Heart right ventricle (tissue), 16 donors: ENCODE measurements at regions of chr1 and their contacts with region 1.

Region 1: DNA sequence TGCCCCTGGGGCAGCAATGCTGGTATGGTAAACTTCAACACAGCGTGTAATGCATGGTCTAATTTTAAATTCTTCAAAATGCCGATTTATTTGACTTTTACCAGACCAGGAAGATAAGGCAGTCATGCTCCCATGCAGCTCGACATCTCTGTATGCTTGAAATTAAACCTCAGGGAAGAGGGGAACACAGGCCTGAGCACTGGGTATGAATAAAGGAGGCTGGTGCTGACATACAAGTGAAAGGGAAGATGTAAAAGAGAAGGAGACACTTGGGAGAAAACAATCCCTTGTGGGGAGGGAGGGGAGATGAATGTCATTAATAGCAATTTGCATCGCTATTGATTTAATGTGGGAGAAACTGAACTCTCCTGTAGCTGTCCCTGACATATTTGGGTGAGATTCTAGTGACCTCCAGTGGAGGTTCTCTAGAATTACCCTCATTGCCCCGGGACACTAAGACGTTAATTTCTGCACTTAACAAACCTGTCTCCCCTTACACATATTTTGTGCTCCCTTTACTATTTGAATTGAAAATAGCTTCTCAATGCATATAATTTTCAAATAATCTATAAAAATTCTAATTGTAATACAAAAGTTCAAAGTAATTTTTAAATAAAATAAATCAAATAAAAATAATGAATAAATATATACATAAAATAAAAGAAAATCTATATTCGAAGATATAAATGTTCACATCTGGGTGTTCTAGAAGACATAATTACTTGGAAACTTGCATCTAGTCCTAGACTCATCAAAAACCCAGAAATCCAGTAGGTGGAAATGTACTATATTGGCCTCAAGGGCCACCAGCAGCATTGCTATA is 283.1 kb downstream of the LMX1A start:
- DNase-seq: no peak
- ATAC-seq: peak; percentile 55 to 76 (median 68)
- H3K4me3 ChIP-seq: no peak overlapping the region
- H3K27ac ChIP-seq: no peak overlapping the region
- H3K4me1 ChIP-seq: peaks cover 0 to 12% (median 0%) of the 10 kb centered on the region in 9 donors
- H3K27me3 ChIP-seq: no peaks in the 10 kb centered on the region
- CTCF ChIP-seq: peak; percentile 64 to 84 (median 79)

Region 2: GRCh38 chr1:163410073-163410999 is 1663.1 kb before region 1 on chr1:
- intact Hi-C with region 1: loop called in 7 of 10 experiments (anchors 5 to 10 kb)
- DNase-seq: peak in 1 of 2 donors; percentile 17
- ATAC-seq: peak in 1 of 8 donors; percentile 9
- H3K4me3 ChIP-seq: no peak overlapping the region
- H3K27ac ChIP-seq: no peak overlapping the region
- H3K4me1 ChIP-seq: peaks cover 0 to 11% (median 0%) of the 10 kb centered on the region in 9 donors
- H3K27me3 ChIP-seq: peaks cover 0 to 3% (median 0%) of the 10 kb centered on the region in 7 donors
- CTCF ChIP-seq: peak; percentile 44 to 84 (median 78)

Region 3: DNA sequence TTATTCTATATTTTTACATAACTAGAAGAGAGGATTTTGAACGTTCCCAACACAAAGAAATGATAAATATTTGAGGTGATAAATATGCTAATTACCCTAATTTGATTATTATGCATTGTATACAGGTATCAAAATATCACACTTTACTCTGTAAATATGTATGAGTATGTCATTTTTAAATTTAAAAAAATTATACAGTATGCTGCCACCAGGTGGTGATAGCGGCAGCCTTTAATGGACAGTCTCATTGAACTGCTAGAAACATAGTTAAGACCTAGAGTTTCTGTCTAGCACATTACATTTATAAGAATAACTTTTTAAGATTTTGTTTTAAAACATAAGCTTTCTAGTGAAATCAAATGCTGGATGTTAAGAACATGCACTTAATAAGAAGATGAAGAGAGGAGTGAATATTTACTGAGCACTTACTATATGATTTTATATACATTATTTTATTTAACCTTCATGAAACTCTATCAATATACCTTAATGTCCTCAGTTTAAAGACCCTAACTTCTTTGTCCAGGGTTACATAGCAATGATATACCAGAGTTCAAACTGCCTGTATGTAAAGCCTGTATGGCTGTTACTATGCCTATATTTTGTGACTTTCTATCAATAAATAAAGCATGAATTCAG is 1544.6 kb before region 1 on chr1:
- intact Hi-C with region 1: loop called in 8 of 10 experiments (anchors 5 to 10 kb)
- DNase-seq: peak in 1 of 2 donors; percentile 7
- ATAC-seq: no peak
- H3K4me3 ChIP-seq: no peak overlapping the region
- H3K27ac ChIP-seq: no peak overlapping the region
- H3K4me1 ChIP-seq: no peaks in the 10 kb centered on the region
- H3K27me3 ChIP-seq: no peaks in the 10 kb centered on the region
- CTCF ChIP-seq: peak in 8 of 9 donors; percentile 30 to 70 (median 58)

Region 4: GRCh38 chr1:164163289-164163864 is 910.0 kb before region 1 on chr1:
- intact Hi-C with region 1: loop called in 1 of 10 experiments (anchors 10 kb)
- DNase-seq: no peak
- ATAC-seq: no peak
- H3K4me3 ChIP-seq: no peak overlapping the region
- H3K27ac ChIP-seq: no peak overlapping the region
- H3K4me1 ChIP-seq: no peaks in the 10 kb centered on the region
- H3K27me3 ChIP-seq: no peaks in the 10 kb centered on the region
- CTCF ChIP-seq: no peak

Region 5: GRCh38 chr1:164823486-164824279 is 249.7 kb before region 1 on chr1:
- intact Hi-C with region 1: loop called in 1 of 10 experiments (anchors 10 kb)
- DNase-seq: peak in 1 of 2 donors; percentile 38
- ATAC-seq: peak; percentile 53 to 95 (median 88)
- H3K4me3 ChIP-seq: no peak overlapping the region
- H3K27ac ChIP-seq: peak overlapping the region in 9 of 10 donors; percentile 32 to 84 (median 70)
- H3K4me1 ChIP-seq: peaks cover 0 to 31% (median 16%) of the 10 kb centered on the region in 9 donors
- H3K27me3 ChIP-seq: no peaks in the 10 kb centered on the region
- CTCF ChIP-seq: peak in 3 of 9 donors; percentile 24 to 27 (median 27)

Region 6: GRCh38 chr1:165367375-165367993 is 294.1 kb after region 1 on chr1:
- intact Hi-C with region 1: no loop called
- DNase-seq: peak; percentile 69 to 81
- ATAC-seq: peak; percentile 47 to 79 (median 68)
- H3K4me3 ChIP-seq: no peak overlapping the region
- H3K27ac ChIP-seq: no peak overlapping the region
- H3K4me1 ChIP-seq: peaks cover 0 to 22% (median 8%) of the 10 kb centered on the region in 9 donors
- H3K27me3 ChIP-seq: peaks cover 0 to 65% (median 14%) of the 10 kb centered on the region in 7 donors
- CTCF ChIP-seq: peak; percentile 84 to 97 (median 95)